Activated CD4-positive, alpha-beta T cell treated with anti-CD3 and anti-CD28 coated beads for 36 hours (primary cell): ENCODE measurements at regions of chr7 and their contacts with region 1.

Region 1: DNA sequence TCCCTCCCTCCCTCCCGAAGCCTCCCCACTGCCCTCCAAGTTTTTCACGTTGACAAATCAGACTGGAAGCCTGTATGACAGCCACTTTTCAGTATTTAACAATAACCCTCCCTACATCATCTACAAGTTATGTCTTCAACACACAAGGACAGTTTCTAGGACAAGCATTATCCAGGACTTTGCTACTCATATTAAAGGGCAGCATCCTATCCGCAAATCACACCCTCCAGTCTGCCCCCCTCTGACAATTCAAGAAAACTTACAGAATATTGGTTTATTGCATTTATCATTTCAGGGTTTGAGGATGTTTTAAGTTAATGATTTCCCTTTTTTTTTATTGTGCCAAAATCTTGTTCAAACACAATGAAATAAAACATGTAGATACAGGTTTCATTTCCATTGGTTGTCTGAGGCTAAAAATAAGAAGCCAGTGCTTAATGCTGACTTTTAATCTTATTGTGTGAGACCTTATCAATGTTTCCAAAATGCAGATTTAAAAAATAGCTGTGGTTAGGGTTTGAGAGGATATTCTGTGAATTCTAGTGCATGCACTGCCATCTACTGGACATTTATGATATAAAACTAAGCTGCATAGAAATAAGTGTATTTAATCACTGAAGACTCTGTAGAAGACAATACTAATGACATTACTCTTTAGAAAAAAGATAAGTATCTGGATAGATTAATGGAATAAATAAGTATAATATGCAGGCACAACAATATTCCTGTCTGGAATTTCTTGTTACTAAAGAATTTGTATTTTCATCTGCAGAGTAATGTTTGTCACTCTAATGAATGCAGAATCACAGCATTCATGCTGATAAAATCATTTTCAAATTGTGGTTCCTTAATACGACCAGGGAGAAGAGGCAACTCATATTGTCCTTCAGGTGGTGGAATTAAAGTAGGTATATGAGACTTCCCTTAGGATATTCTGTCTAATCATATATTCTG is 64.1 kb downstream of the CAV1 start:
- DNase-seq: no peak
- ATAC-seq: peak; percentile 13
- H3K4me3 Mint-ChIP-seq: no peak overlapping the region
- H3K27ac Mint-ChIP-seq: peak overlapping the region; percentile 39
- H3K4me1 Mint-ChIP-seq: peaks cover 24% of the 10 kb centered on the region
- H3K27me3 Mint-ChIP-seq: peaks cover 18% of the 10 kb centered on the region

Region 2: GRCh38 chr7:116173051-116174028 is 415.6 kb before region 1 on chr7:
- CTCF ChIA-PET with region 1: interaction called, 12 read pairs
- POLR2A ChIA-PET with region 1: no interaction called
- intact Hi-C with region 1: loop called (anchors 1 kb)
- DNase-seq: peak; percentile 15
- ATAC-seq: no peak
- H3K4me3 Mint-ChIP-seq: no peak overlapping the region
- H3K27ac Mint-ChIP-seq: no peak overlapping the region
- H3K4me1 Mint-ChIP-seq: no peaks in the 10 kb centered on the region
- H3K27me3 Mint-ChIP-seq: peaks cover 6% of the 10 kb centered on the region

Region 3: DNA sequence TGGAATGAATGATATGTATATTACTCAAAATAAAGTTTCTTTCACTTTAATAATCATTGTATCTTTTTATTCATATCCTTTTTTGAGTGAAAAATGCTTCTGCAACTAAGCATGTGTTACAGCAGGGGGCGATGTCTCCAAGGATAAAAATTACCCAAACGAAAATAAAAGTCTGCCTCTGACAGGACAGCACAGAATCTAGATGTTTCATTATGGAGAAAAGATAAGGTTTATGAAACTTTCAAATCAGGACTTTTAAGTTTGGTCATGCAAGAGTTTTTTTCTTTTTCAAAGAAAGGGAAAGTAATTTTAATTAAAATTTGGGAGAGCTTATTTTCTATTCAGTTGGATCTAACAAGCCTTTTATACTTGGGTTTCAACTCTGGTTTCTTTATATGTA is 330.2 kb before region 1 on chr7:
- CTCF ChIA-PET with region 1: interaction called, 67 read pairs
- POLR2A ChIA-PET with region 1: no interaction called
- intact Hi-C with region 1: loop called (anchors 1 kb)
- DNase-seq: peak; percentile 39
- ATAC-seq: peak; percentile 68
- H3K4me3 Mint-ChIP-seq: no peak overlapping the region
- H3K27ac Mint-ChIP-seq: no peak overlapping the region
- H3K4me1 Mint-ChIP-seq: peaks cover 20% of the 10 kb centered on the region
- H3K27me3 Mint-ChIP-seq: no peaks in the 10 kb centered on the region

Region 4: GRCh38 chr7:116576350-116577319 is 12.3 kb before region 1 on chr7:
- CTCF ChIA-PET with region 1: interaction called, 19 read pairs
- POLR2A ChIA-PET with region 1: interaction called, 3 read pairs
- intact Hi-C with region 1: no loop called
- DNase-seq: peak; percentile 23
- ATAC-seq: peak; percentile 74
- H3K4me3 Mint-ChIP-seq: no peak overlapping the region
- H3K27ac Mint-ChIP-seq: no peak overlapping the region
- H3K4me1 Mint-ChIP-seq: peaks cover 10% of the 10 kb centered on the region
- H3K27me3 Mint-ChIP-seq: peaks cover 4% of the 10 kb centered on the region

Region 5: DNA sequence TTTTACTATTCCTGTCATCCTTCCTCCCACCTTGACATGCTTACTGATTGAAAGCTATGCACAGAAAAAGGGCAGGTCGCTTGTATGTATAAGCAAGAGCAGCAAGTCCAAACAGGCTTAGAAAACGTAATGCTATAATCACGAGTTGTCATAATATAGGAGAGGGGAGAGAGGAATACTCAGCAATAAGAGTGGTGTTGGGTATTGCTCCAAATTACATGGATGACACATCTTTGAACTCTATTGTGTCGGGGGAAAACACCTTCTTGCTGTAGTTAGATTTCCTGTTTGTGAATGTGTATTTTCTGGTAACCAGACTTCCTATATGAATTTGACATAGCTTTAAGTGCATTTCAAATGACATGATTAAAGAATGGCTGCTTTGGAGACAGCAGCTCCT is 90.6 kb after region 1 on chr7:
- CTCF ChIA-PET with region 1: interaction called, 4 read pairs
- POLR2A ChIA-PET with region 1: no interaction called
- intact Hi-C with region 1: loop called in 1 of 2 experiments (anchors 5 kb)
- DNase-seq: no peak
- ATAC-seq: peak; percentile 99
- H3K4me3 Mint-ChIP-seq: no peak overlapping the region
- H3K27ac Mint-ChIP-seq: no peak overlapping the region
- H3K4me1 Mint-ChIP-seq: peaks cover 8% of the 10 kb centered on the region
- H3K27me3 Mint-ChIP-seq: peaks cover 33% of the 10 kb centered on the region